BJ (cell line): ENCODE measurements at regions of chr17 and their contacts with region 1.

Region 1: DNA sequence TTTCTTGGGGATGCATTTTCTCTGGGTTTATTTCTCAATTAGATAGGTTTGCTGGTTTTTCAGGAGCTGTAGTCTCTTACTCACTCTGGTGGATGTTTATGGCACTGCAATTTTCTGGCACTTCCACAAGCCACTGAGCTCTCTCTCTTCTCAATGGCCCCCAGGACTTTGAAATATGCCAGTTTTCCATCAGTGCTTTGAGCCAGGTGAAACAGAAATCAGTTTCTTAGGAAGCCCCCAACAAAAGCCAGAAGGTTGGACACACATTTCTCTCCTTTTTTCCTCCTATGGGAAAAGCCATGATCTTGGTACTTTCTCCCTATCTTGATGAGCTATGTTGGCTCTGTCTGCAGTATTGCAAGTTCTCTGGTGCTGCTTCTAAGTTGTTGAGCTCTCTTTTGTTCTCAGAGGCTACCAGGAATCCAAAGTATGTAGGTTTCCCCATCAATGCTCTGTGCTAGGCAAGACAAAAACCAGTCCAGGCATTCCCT is 90.7 kb upstream of the SMIM36 start:
- DNase-seq: no peak
- H3K4me3 ChIP-seq: no peak overlapping the region
- H3K27me3 ChIP-seq: peaks cover 7% of the 10 kb centered on the region; the same call in 1 of the 2 replicates
- CTCF ChIP-seq: peak; percentile 85

Region 2: GRCh38 chr17:54982399-54982798 is 619.5 kb before region 1 on chr17:
- CTCF ChIA-PET with region 1: no interaction called
- POLR2A ChIA-PET with region 1: no interaction called
- DNase-seq: no peak
- H3K4me3 ChIP-seq: no peak overlapping the region
- H3K27me3 ChIP-seq: no peaks in the 10 kb centered on the region
- CTCF ChIP-seq: no peak

Region 3: GRCh38 chr17:55533608-55534007 is 68.3 kb before region 1 on chr17:
- CTCF ChIA-PET with region 1: interaction called, 263 read pairs
- POLR2A ChIA-PET with region 1: no interaction called
- DNase-seq: no peak
- H3K4me3 ChIP-seq: no peak overlapping the region
- H3K27me3 ChIP-seq: peaks cover 1% of the 10 kb centered on the region; the same call in 1 of the 2 replicates
- CTCF ChIP-seq: no peak

Region 4: GRCh38 chr17:55576996-55577586 is 24.8 kb before region 1 on chr17:
- CTCF ChIA-PET with region 1: interaction called, 13 read pairs
- POLR2A ChIA-PET with region 1: no interaction called
- DNase-seq: peak; percentile 45
- H3K4me3 ChIP-seq: peak overlapping the region; percentile 2
- H3K27me3 ChIP-seq: no peaks in the 10 kb centered on the region
- CTCF ChIP-seq: no peak

Region 5: DNA sequence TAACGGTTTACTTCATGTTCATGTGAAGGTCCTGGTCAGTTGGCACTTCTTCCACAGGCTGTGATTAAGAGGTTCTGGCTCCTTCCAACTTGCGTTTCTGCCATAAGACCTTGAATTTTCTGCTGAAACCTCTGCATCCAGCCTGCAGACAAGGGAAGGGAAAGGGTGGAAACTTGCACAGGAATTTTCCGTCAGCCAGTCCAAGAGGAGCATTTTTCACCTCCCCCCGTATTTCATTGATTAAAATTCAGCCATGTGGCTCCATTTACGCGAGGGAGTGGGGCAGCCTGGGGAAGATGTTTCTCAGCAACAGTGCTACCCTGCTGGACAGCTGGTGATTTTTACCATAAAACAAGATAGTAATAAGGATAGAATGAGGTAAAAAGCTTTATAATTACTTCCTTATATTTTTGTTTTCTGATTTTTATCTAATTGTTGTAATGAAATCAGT is 10.8 kb after region 1 on chr17:
- CTCF ChIA-PET with region 1: interaction called, 11 read pairs
- POLR2A ChIA-PET with region 1: no interaction called
- DNase-seq: no peak
- H3K4me3 ChIP-seq: no peak overlapping the region
- H3K27me3 ChIP-seq: peaks cover 6% of the 10 kb centered on the region; the same call in 1 of the 2 replicates
- CTCF ChIP-seq: no peak

Region 6: DNA sequence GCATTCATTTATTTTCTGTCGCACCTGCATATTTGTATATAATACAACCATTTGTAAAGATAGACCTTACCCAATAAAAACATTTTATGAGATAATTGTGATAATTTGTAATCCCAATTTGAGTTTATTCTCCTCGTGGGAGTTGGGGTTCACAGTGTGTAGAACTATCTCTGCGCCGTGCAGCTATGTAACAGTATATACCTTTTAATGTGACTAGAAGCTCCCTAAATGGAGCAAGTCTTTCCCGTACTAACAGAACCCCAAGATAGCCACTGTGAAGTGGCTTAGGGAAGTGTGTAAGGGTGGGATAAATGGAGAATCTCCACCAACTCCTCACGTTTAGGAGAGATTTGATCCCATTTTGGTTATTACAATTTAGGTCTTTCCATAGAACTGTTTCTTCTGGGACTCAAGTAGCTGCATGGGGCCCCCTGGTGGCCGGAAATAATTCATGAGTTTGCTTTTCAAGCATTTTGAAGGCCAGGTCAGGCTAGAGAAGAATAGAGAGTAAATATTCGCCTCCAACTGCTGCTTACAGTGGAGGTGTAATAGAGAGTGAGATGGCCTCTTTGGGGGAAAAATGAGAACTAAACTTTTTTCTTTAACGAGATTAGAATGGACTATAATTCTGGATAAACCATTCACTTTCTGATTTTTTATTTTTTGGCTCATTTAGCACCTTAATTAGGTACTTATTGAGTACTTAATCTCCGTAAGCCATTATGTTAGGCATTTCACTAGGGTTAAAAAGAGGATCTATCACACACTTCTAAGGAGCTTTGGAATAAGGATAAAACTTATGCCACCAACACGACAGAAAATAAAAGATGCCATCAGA is 116.2 kb after region 1 on chr17:
- CTCF ChIA-PET with region 1: interaction called, 23 read pairs
- POLR2A ChIA-PET with region 1: no interaction called
- DNase-seq: no peak
- H3K4me3 ChIP-seq: no peak overlapping the region
- H3K27me3 ChIP-seq: 0 out of 2 replicates have a peak, but pooled peaks cover 1% of the 10 kb centered on the region
- CTCF ChIP-seq: peak; percentile 78